Left cardiac atrium (tissue), 4 donors: ENCODE measurements at regions of chr18 and their contacts with region 1.

Region 1: GRCh38 chr18:60549338-60549960 is 176.9 kb upstream of the MC4R start:
- DNase-seq: no peak
- ATAC-seq: no peak

Region 2: GRCh38 chr18:59208602-59209125 is 1340.8 kb before region 1 on chr18:
- intact Hi-C with region 1: no loop called
- DNase-seq: no peak
- ATAC-seq: no peak

Region 3: GRCh38 chr18:59293317-59293716 is 1256.1 kb before region 1 on chr18:
- intact Hi-C with region 1: no loop called
- DNase-seq: no peak
- ATAC-seq: no peak

Region 4: DNA sequence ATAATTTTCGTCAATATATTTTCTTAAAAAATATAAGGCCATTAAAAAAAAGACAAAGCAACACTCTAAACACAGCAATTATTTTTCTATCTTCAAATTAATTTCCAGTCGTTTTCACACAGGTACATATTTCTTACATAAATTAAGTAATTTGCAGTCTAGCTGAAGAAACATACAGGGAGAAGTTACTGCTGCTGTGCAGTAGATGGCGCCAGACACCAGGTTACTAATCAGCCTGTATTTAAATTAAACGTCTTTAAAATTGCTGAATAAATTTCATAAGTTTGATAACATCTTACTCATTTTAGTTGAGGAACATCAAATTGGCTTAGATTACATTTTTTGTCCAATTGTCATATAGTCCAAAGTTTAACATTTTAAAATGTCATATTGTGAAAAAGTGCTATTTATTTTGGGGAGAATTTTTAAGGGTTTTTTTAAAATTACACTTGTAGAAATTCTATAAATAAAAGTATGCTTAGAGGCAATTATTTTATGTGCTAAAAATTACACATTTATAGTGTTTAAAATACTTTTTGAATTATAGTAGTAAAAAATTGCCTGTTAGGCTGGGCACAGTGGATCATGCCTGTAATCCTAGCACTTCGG is 561.2 kb before region 1 on chr18:
- intact Hi-C with region 1: loop called in 1 of 2 experiments (anchors 5 kb)
- DNase-seq: peak; percentile 39
- ATAC-seq: no peak

Region 5: GRCh38 chr18:60372596-60372995 is 176.9 kb before region 1 on chr18 and contains the start of gene MC4R:
- intact Hi-C with region 1: no loop called
- DNase-seq: peak; percentile 20
- ATAC-seq: peak; percentile 65 to 98
- total RNA-seq, gene MC4R: not detected

Region 6: GRCh38 chr18:61064911-61065310 is 515.5 kb after region 1 on chr18:
- intact Hi-C with region 1: no loop called
- DNase-seq: no peak
- ATAC-seq: no peak